HEK293 (cell line): ENCODE measurements at regions of chr1 and their contacts with region 1.

Region 1: DNA sequence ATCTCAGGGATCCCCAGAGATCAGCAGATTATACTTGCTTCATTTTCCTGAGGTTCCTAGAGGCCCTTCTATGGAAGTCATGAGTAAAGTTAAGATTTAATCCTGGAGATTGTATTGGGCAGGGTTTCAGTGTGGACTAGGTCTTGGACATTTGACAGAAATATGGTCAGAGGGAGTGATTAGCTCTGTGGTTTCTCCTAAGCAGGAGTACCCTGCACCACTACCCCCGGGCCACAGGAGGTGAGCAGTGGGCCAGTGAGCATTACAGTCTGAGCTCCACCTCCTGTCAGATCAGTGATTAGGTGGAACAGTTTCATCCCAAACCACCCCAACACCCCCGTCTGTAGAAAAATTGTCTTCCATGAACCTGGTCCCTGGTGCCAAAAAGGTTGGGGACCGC is 43.2 kb downstream of the PHACTR4 start:
- H3K4me3 ChIP-seq: no peak overlapping the region
- H3K27ac ChIP-seq: no peak overlapping the region
- H3K4me1 ChIP-seq: peaks cover 12% of the 10 kb centered on the region
- CTCF ChIP-seq: no peak

Region 2: DNA sequence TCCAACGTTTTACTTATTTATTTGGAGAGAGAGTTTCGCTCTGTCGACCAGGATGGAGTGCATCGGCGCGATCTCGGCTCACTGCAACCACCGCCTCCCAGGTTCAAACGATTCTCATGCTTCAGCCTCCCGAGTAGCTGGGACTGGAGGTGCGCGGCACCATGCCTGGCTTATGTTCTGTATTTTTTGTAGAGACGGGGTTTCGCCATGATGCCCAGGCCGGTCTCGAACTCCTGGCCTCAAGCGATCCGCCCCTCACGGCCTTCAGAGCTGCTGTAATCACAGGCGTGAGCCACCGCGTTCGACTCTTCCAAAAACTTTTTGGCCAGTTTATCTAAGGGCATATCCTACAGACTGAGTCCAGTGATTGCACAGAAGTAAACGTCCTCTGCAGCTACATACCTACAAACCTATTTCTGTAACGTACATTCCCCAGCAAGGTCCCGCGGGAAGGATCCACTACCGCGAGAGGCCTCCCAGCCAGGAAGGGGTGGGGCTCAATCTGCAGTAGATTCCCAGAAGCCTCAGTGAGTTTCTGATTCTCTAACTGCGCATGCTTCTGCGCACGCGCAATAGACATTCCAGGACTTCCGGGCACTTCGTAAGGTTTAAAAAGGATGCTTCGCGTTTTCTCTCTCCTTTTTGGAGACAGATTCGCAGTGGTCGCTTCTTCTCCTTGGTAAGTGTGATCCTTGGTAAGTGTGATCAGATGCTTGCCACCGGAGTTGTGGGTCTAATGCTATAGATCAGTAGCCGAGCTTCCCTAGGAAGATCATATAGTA is 92.9 kb after region 1 on chr1 and contains the start of gene RCC1:
- CTCF ChIA-PET with region 1: interaction called, 5 read pairs
- POLR2A ChIA-PET with region 1: interaction called, 10 read pairs
- H3K4me3 ChIP-seq: peak within 1 kb of the TSS; percentile 79
- H3K27ac ChIP-seq: peak within 1 kb of the TSS; percentile 86
- H3K4me1 ChIP-seq: no peaks in the 10 kb centered on the region; the same call in 1 of the 2 replicates
- CTCF ChIP-seq: no peak

Region 3: DNA sequence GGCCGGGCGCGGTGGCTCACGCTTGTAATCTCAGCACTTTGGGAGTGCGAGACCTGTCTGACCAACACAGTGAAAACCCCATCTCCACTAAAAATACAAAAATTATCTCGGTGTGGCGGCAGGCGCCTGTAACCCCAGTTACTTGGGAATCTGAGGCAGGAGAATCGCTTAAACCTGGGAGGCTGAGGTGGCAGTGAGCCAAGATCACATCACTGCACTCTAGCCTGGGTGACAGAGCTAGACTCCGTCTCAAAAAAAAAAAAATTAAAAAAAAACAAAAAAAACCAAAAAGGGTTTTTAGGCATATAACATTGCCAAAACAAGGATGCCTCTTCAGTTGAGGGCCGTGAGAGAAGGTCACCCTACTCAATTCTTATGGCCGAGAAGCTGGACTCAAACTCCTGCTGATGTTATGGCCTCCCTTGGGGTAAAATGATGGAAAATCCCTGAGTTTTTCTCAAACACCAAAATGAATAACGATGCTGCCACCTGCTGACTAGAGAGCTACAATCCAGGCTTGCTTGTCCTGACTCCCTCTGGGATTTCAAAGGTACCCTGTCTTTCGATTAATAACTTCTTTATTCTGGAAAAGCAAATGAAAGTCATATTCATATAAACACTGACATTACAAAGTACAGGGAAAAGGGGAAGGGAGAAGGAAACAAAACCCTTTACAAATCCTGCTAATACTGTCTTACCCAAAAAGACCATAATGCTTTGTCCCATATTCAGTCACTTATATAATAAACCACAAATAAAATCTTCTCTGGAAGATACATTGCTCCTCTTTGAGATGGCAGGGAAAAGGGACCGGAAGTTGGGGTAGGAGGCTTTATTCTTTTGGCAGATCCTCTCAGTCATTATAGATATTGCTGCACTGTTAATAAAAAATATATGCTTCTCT is 190.1 kb after region 1 on chr1:
- CTCF ChIA-PET with region 1: interaction called, 26 read pairs
- POLR2A ChIA-PET with region 1: interaction called, 6 read pairs
- H3K4me3 ChIP-seq: no peak overlapping the region
- H3K27ac ChIP-seq: no peak overlapping the region
- H3K4me1 ChIP-seq: peaks cover 5% of the 10 kb centered on the region
- CTCF ChIP-seq: peak; percentile 47